G401 (cell line): ENCODE measurements at regions of chr2 and their contacts with region 1.

Region 1: GRCh38 chr2:218659258-218659987 is at the starts of genes BCS1L and ZNF142:
- DNase-seq: peak; percentile 97
- total RNA-seq, gene BCS1L: 19.4 and 47.4 TPM in 2 replicates
- total RNA-seq, gene ZNF142: 4.4 and 6.2 TPM in 2 replicates

Region 2: GRCh38 chr2:218701806-218702205 is 42.4 kb after region 1 on chr2:
- in situ Hi-C with region 1: loop called (anchors 5 kb)
- DNase-seq: peak; percentile 14